Activated CD4-positive, alpha-beta T cell treated with anti-CD3 and anti-CD28 coated beads, Interleukin-2, amount 10 ng/mL, durations not matched to agents 7 days and 5 days (primary cell): ENCODE measurements at regions of chr1 and their contacts with region 1.

Region 1: DNA sequence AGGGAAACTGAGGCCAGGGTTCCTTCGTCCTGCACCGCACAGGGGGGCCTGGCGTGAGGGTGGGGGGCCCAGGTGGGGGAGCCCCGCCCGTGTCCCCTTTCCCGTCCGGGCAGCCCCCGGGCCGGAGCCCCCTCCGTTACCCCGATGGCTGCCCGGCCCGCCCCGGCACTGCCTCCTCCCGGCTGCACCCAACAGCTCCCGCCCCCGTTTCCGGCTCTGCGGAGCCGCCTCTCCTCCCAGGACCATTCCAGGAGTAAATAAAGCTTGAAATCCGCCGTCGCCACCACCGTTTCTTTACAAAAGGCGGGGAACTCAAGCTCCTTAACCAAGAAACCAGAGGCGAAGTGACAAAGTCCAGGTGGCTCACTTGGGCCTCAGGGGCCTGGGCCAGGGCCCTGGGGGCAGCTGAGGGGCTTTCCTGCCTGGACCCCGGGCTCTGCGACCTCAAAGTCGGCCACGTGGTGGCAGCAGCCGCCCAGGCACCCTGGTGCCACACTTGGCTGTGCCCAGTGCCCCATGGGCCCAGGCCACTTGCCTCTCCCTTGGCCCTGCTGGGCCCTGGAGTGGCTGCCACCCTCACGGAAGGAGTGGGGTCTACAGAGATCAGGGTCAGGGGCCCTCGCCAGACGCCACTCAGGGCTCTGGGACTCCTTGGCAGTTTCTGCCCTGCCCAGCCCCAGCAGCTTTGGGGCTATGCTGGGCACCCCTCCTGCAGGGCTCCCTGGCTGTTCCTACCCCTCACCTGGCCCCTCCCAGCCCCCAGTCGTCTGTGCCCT is 514 bp upstream of the FAAP20 start:
- DNase-seq: peak; percentile 91
- H3K4me3 Mint-ChIP-seq: peak overlapping the region; percentile 79
- H3K27ac Mint-ChIP-seq: peak overlapping the region; percentile 94
- H3K4me1 Mint-ChIP-seq: peaks cover 32% of the 10 kb centered on the region
- H3K27me3 Mint-ChIP-seq: no peaks in the 10 kb centered on the region

Region 2: DNA sequence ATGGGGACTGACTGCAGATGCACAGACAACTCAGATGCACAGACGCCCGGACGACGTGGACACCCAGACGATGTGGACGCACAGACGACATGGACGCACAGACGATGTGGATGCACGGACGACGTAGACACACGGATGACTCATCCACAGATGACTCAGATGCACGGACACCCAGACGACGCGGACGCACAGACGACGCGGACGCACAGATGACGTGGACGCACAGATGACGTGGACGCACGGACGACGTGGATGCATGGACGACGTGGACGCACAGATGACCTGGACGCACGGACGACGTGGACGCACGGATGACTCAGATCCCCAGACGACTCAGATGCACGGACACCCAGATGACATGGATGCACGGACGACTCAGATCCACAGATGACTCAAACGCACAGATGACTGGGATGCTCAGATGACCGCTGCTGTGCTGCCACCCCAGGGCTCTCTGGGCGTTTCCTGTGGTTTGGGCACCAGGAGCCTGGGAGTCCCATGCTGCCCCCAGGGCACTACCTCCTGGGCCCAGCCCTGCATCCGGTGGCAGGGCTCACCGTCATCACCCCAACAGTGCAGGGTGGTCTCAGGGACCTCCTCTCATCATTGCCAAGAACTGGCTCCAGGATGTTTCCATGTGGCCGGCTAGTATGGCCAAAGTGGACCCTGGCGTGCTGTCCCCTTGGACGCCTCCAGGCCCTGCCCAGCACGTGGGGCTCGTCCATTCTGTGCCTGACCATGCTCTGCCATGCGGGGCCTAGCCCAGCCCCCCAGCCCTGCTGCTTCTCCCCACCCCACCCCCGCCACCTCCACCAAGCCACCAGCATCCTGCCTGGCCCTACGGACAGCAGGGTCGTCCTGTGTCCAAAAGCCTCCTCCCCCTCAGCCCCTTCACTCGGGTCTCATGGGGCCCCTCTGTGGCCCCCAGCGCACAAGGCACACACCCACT is 14.5 kb before region 1 on chr1:
- CTCF ChIA-PET with region 1: no interaction called
- POLR2A ChIA-PET with region 1: no interaction called
- DNase-seq: no peak
- H3K4me3 Mint-ChIP-seq: no peak overlapping the region
- H3K27ac Mint-ChIP-seq: no peak overlapping the region
- H3K4me1 Mint-ChIP-seq: no peaks in the 10 kb centered on the region
- H3K27me3 Mint-ChIP-seq: no peaks in the 10 kb centered on the region

Region 3: GRCh38 chr1:2205191-2205952 is 10.3 kb after region 1 on chr1:
- CTCF ChIA-PET with region 1: interaction called, 31 read pairs
- POLR2A ChIA-PET with region 1: no interaction called
- DNase-seq: peak; percentile 94
- H3K4me3 Mint-ChIP-seq: peak overlapping the region; percentile 58
- H3K27ac Mint-ChIP-seq: no peak overlapping the region
- H3K4me1 Mint-ChIP-seq: peaks cover 5% of the 10 kb centered on the region
- H3K27me3 Mint-ChIP-seq: no peaks in the 10 kb centered on the region

Region 4: DNA sequence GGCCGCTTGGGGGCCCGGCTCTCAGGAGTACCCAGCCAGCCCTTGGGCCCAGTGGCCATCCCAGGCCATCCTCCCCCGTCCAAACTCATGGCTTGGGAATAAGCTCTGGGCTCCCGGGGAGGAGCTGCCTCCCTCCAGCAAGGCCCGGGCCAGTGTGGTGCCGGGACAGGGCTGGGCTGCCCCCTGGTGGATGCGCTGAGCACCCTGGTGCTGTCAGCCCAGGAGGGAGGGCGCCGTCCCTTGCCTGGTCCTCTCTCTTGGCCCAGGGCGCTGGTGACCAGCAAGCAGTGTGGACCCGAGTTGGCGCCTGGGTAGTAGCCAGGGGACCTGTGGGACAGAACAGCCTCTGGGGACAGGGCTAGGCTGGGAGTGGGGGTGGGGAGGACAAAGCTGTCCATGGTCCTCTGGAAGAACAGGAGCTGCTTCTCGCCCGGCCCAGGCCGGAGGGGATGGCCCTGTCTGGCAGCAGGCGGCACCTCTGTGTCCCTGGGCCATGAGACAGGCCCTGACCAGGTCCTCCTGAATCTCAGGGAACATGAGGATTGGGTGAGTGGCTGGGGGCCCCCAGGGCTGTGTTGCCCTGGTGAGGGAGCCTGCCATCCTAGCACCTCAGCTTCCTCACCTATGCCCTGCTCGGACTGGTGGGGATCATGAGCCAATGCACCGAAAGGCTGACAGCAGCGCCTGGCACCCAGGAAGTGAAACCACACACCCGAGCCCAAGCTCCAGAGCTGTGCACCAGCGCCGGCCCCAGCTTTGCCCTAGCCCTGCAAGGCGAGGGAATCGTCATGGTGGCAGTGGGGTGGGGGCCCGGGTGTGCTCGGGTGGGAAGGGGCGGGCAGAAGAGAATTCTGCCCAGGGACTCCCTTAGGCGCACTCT is 186.9 kb after region 1 on chr1:
- CTCF ChIA-PET with region 1: interaction called, 58 read pairs
- POLR2A ChIA-PET with region 1: no interaction called
- DNase-seq: peak; percentile 78
- H3K4me3 Mint-ChIP-seq: no peak overlapping the region
- H3K27ac Mint-ChIP-seq: peak overlapping the region; percentile 54
- H3K4me1 Mint-ChIP-seq: peaks cover 4% of the 10 kb centered on the region
- H3K27me3 Mint-ChIP-seq: no peaks in the 10 kb centered on the region

Region 5: DNA sequence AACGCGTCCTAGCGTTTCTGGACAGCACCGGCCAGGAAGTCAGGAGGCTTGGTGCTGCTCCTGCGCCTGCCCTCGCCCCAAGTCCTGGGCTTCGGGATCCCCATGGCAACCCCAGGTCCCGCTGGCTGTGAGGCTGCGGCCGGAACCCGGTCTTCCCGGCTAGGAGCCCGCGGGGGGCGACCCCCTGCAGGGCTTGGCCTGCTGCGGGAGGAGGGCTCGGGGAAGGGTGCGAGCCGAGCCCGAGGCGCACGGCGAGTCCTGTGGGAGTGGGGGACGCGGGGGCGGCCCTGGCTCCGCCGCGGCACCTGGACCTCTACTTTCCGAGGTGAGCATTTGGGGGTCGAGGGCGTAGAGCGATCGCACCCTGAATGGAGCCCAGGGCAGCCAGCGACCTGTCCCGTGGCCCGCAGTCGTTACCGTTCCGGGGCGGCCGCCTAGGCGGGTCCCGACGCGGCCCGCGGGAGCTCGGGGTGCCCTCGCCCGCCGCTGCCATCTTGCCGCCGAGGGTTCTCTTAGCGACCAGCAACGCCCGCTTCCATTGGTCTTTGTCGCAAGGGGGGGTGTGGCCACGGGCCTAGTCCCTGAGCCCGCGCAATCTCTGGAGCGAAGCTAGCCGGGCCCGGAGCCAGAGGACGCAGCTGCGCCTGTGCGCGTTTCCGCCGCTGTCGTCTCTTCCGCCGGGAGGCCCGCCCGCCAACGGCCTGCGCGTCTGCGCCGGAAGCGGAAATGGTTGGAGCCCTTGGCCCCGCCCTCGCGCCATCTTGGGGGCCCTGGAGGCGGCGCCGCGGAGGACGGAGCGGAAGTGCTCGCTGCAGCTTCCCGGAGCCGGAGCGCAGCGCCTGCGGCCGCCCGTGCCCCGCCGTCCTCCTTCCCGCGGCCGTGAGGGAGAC is 196.2 kb after region 1 on chr1 and contains the starts of genes MORN1 and RER1:
- CTCF ChIA-PET with region 1: interaction called, 17 read pairs
- POLR2A ChIA-PET with region 1: no interaction called
- DNase-seq: peak; percentile 99
- H3K4me3 Mint-ChIP-seq: peak within 1 kb of the TSS; percentile 79
- H3K27ac Mint-ChIP-seq: peak within 1 kb of the TSS; percentile 82
- H3K4me1 Mint-ChIP-seq: peaks cover 36% of the 10 kb centered on the region
- H3K27me3 Mint-ChIP-seq: no peaks in the 10 kb centered on the region
- total RNA-seq, gene MORN1: 6.7 to 8.1 TPM
- total RNA-seq, gene RER1: 156 to 159 TPM

Region 6: GRCh38 chr1:2532485-2533160 is 337.5 kb after region 1 on chr1:
- CTCF ChIA-PET with region 1: no interaction called
- POLR2A ChIA-PET with region 1: no interaction called
- DNase-seq: no peak
- H3K4me3 Mint-ChIP-seq: no peak overlapping the region
- H3K27ac Mint-ChIP-seq: no peak overlapping the region
- H3K4me1 Mint-ChIP-seq: peaks cover 9% of the 10 kb centered on the region
- H3K27me3 Mint-ChIP-seq: peaks cover 32% of the 10 kb centered on the region